K562 (cell line): ENCODE measurements at regions of chr3 and their contacts with region 1.

Region 1: GRCh38 chr3:5057857-5058324 is 64.2 kb upstream of the ARL8B start:
- DNase-seq: peak; percentile 73 to 93 (median 76)
- ATAC-seq: peak; percentile 96
- H3K4me3 ChIP-seq: no peak overlapping the region
- H3K27ac ChIP-seq: no peak overlapping the region
- H3K4me1 ChIP-seq: peaks cover 5 to 36% of the 10 kb centered on the region in 2 experiments; a peak in 4 of 5 replicates
- H3K27me3 ChIP-seq: no peaks in the 10 kb centered on the region
- CTCF ChIP-seq: peak; percentile 88 to 94 (median 91)
- EP300 ChIP-seq: peak; percentile 44; the same call in 1 of the 2 replicates
- POLR2A ChIP-seq: no peak
- RAD21 ChIP-seq: peak; percentile 99

Region 2: GRCh38 chr3:4350789-4351163 is 707.1 kb before region 1 on chr3:
- CTCF ChIA-PET with region 1: no interaction called
- POLR2A ChIA-PET with region 1: no interaction called
- in situ Hi-C with region 1: no loop called
- intact Hi-C with region 1: loop called (anchors 5 kb)
- DNase-seq: peak; percentile 69 to 87 (median 76)
- ATAC-seq: peak; percentile 88
- H3K4me3 ChIP-seq: peak overlapping the region; percentile 4; the same call in 1 of the 2 replicates
- H3K27ac ChIP-seq: peak overlapping the region; percentile 82
- H3K4me1 ChIP-seq: peaks cover 0 to 19% of the 10 kb centered on the region in 2 experiments; a peak in 4 of 5 replicates
- H3K27me3 ChIP-seq: no peaks in the 10 kb centered on the region
- CTCF ChIP-seq: peak; percentile 77 to 94 (median 89)
- EP300 ChIP-seq: no peak
- POLR2A ChIP-seq: no peak
- RAD21 ChIP-seq: peak; percentile 84 to 88

Region 3: GRCh38 chr3:4712143-4712542 is 345.7 kb before region 1 on chr3:
- CTCF ChIA-PET with region 1: interaction called, 21 read pairs
- POLR2A ChIA-PET with region 1: interaction called, 9 read pairs
- in situ Hi-C with region 1: no loop called
- intact Hi-C with region 1: no loop called
- DNase-seq: no peak
- ATAC-seq: no peak
- H3K4me3 ChIP-seq: no peak overlapping the region
- H3K27ac ChIP-seq: no peak overlapping the region
- H3K4me1 ChIP-seq: no peaks in the 10 kb centered on the region; a peak in 1 of 5 replicates
- H3K27me3 ChIP-seq: no peaks in the 10 kb centered on the region
- CTCF ChIP-seq: no peak
- EP300 ChIP-seq: no peak
- POLR2A ChIP-seq: no peak
- RAD21 ChIP-seq: 0 out of 4 replicates have a peak, but pooled peaks of 1 of the 2 experiments have one; percentile 3

Region 4: GRCh38 chr3:4814305-4814903 is 243.5 kb before region 1 on chr3:
- CTCF ChIA-PET with region 1: no interaction called
- POLR2A ChIA-PET with region 1: no interaction called
- in situ Hi-C with region 1: no loop called
- intact Hi-C with region 1: loop called (anchors 5 kb)
- DNase-seq: peak; percentile 96 to 99 (median 98)
- ATAC-seq: peak; percentile 93
- H3K4me3 ChIP-seq: peak overlapping the region; percentile 39
- H3K27ac ChIP-seq: peak overlapping the region; percentile 93
- H3K4me1 ChIP-seq: peaks cover 16 to 67% of the 10 kb centered on the region in 2 experiments
- H3K27me3 ChIP-seq: no peaks in the 10 kb centered on the region
- CTCF ChIP-seq: no peak
- EP300 ChIP-seq: peak; percentile 96
- POLR2A ChIP-seq: peak; percentile 84
- RAD21 ChIP-seq: peak in 1 of 2 experiments; percentile 19; a peak in 2 of 4 replicates

Region 5: GRCh38 chr3:4986782-4987537 is 70.9 kb before region 1 on chr3:
- CTCF ChIA-PET with region 1: interaction called, 11 read pairs
- POLR2A ChIA-PET with region 1: interaction called, 12 read pairs
- in situ Hi-C with region 1: no loop called
- intact Hi-C with region 1: no loop called
- DNase-seq: peak; percentile 61 to 97 (median 76)
- ATAC-seq: peak; percentile 84
- H3K4me3 ChIP-seq: peak overlapping the region; percentile 41
- H3K27ac ChIP-seq: peak overlapping the region; percentile 83
- H3K4me1 ChIP-seq: peaks cover 49 to 75% of the 10 kb centered on the region in 2 experiments
- H3K27me3 ChIP-seq: no peaks in the 10 kb centered on the region
- CTCF ChIP-seq: no peak
- EP300 ChIP-seq: peak; percentile 66
- POLR2A ChIP-seq: peak; percentile 78
- RAD21 ChIP-seq: peak in 1 of 2 experiments; percentile 26; a peak in 1 of 4 replicates